ENCODE measurements at regions of chr2 and their contacts with region 1.

Region 1: DNA sequence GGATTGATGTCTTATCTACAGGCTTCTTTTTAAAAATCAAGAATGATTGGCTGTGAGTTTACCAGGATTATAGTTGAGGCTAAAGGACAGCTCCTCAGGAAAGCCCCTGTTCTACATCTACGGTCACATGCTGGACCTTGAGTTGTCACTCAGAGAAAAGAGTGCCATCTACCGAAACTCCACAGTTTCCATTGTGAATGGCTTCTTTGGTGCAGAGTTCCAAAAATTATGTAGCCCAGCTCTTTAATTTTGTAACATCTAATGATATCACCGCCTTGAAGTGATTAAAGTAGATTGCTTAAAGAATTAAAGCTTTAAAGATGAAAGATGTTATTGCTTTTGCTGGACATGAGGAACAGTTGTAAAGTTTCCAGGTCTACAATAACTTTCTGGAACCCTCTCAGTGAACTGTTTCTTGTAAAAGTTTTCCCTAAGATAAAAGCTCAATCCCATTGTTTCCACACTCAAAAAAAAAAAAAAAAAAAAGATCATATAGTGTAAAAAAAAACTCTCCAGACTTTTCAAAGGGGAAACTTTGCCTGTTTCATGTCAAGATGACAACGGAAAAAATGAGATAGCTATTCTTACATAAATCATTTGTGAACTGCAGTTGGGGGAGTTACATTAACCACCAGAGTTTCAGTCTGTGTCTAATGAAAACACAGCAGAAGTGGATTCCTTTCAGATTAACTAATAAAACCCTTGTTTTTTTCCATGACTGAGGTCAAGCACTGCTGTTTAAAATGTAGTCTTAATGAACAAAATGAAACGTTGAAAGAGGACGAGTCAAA is 4.3 kb downstream of the COL3A1 start:
- DNase-seq: peak in 1 of 5 donors; percentile 17
- ATAC-seq: peak; percentile 53 to 65 (median 60)
- H3K4me3 ChIP-seq: peak overlapping the region in 10 of 12 donors; percentile 7 to 70 (median 56)
- H3K27ac ChIP-seq: peak overlapping the region in 11 of 12 donors; percentile 28 to 83 (median 70)
- H3K4me1 ChIP-seq: peaks cover 0 to 5% (median 0%) of the 10 kb centered on the region in 12 donors
- H3K27me3 ChIP-seq: no peaks in the 10 kb centered on the region
- CTCF ChIP-seq: peak in 9 of 12 donors; percentile 13 to 60 (median 46)
- POLR2A ChIP-seq: no peak

Region 2: DNA sequence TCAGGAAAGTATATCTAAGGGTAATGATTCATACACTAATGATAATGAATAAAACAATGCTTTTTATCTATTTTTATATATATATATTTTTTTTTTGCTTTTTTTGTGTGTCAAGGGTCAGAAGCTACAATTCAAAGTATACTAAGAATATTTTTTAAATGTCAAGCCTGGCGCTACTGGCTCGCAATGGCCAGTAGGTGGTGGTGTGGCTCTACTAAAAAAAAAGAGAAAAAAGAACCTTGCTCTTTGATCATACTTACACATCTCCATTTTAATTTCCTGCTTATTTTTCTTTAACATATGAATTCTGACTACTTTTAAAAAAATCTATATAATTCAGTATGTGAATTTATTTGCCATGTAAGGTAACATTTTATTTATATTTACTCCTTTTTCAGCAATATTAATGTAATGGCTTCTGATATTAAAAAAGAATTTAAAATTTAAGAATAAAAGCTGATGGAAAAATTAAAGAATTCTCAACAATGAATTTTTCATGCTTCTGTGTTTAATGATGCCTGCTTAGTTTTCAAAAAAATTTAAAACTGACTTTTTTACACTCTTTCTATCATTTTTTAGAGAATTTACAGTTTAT is 453.9 kb before region 1 on chr2:
- intact Hi-C with region 1: loop called (anchors 5 to 10 kb)
- DNase-seq: no peak
- ATAC-seq: peak in 1 of 4 donors; percentile 72
- H3K4me3 ChIP-seq: no peak overlapping the region
- H3K27ac ChIP-seq: no peak overlapping the region
- H3K4me1 ChIP-seq: peaks cover 0 to 11% (median 0%) of the 10 kb centered on the region in 12 donors
- H3K27me3 ChIP-seq: no peaks in the 10 kb centered on the region
- CTCF ChIP-seq: peak; percentile 66 to 89 (median 80)
- POLR2A ChIP-seq: no peak

Region 3: GRCh38 chr2:188788621-188789020 is 189.9 kb before region 1 on chr2:
- intact Hi-C with region 1: loop called in 7 of 10 experiments (anchors 2 to 10 kb)
- DNase-seq: peak in 4 of 5 donors; percentile 70 to 79 (median 72)
- ATAC-seq: peak in 3 of 4 donors; percentile 64 to 76 (median 69)
- H3K4me3 ChIP-seq: peak overlapping the region in 5 of 12 donors; percentile 1 to 31 (median 23)
- H3K27ac ChIP-seq: peak overlapping the region; percentile 22 to 87 (median 77)
- H3K4me1 ChIP-seq: peaks cover 0 to 28% (median 0%) of the 10 kb centered on the region in 12 donors
- H3K27me3 ChIP-seq: no peaks in the 10 kb centered on the region
- CTCF ChIP-seq: no peak
- POLR2A ChIP-seq: no peak

Region 4: DNA sequence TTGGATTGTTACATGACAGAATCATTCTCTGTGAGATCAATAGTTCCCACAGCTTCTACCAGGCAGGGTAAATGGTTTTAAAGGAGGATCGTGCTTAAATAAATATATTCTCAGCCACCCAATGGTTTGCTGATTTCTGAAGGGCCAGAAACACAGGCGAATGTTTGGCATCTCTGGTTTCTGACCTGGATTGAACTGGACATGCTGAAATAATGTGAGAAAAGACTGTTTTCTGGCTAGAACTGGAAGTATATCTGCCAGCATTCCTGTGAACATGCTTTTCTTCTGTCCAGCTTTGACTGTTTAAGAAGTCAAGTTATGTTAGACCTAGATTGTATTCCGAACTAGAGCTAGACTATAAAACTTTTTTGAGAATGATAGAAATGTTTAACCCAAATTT is 81.4 kb before region 1 on chr2:
- intact Hi-C with region 1: loop called in 1 of 10 experiments (anchors 10 kb)
- DNase-seq: peak in 1 of 5 donors; percentile 11
- ATAC-seq: peak in 3 of 4 donors; percentile 20 to 73 (median 50)
- H3K4me3 ChIP-seq: no peak overlapping the region
- H3K27ac ChIP-seq: peak overlapping the region in 7 of 12 donors; percentile 25 to 68 (median 40)
- H3K4me1 ChIP-seq: peaks cover 0 to 11% (median 0%) of the 10 kb centered on the region in 12 donors
- H3K27me3 ChIP-seq: no peaks in the 10 kb centered on the region
- CTCF ChIP-seq: no peak
- POLR2A ChIP-seq: no peak

Region 5: DNA sequence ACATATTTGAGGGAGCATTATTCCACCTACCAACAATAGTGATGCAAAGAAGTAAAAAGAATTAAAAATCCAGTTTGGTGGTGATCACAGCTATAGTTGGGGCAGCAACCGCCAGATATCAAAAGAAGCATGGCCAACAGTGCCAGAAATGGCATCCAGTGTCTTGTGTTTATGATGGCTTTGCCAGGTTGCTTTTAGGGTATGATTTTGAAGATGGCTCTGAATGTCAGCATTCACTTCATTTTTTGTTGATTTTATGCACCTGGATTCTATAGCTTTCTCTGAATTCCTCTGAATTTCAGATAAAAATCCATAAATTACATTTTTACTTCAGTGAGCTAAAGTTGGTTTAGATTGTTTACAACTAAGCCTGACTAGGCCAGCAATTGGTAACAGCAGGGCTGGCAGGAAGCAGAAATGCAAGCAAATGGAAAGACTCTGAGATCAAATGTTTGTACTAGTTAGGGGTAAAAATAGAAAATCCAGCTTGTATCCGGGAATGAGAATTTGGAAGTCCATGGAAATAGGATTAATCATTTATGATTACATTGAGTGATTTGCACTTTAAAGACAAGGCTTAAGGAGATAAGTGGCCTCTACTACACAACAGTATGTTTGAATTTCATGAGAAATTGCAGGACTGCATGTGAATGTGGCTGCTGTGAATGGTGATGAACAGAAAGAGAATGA is 36.1 kb after region 1 on chr2:
- intact Hi-C with region 1: no loop called
- DNase-seq: no peak
- ATAC-seq: peak in 2 of 4 donors; percentile 35 to 44
- H3K4me3 ChIP-seq: no peak overlapping the region
- H3K27ac ChIP-seq: peak overlapping the region in 5 of 12 donors; percentile 5 to 48 (median 15)
- H3K4me1 ChIP-seq: peaks cover 0 to 15% (median 0%) of the 10 kb centered on the region in 12 donors
- H3K27me3 ChIP-seq: no peaks in the 10 kb centered on the region
- CTCF ChIP-seq: no peak
- POLR2A ChIP-seq: no peak